ENCODE measurements at regions of chr15 and their contacts with region 1.

Region 1: GRCh38 chr15:90529371-90530249 is at the start of gene CRTC3:
- DNase-seq: peak; percentile 59 to 78 (median 69)
- ATAC-seq: peak; percentile 77 to 94 (median 86)
- H3K4me3 ChIP-seq: peak within 1 kb of the TSS; percentile 65 to 95 (median 85)
- H3K27ac ChIP-seq: peak within 1 kb of the TSS; percentile 86 to 98 (median 95)
- H3K4me1 ChIP-seq: peaks cover 0 to 42% (median 24%) of the 10 kb centered on the region in 12 donors
- H3K27me3 ChIP-seq: no peaks in the 10 kb centered on the region
- CTCF ChIP-seq: no peak
- POLR2A ChIP-seq: peak in 1 of 2 donors; percentile 64
- total RNA-seq, gene CRTC3: 21.5 to 42.2 (median 26.8) TPM

Region 2: DNA sequence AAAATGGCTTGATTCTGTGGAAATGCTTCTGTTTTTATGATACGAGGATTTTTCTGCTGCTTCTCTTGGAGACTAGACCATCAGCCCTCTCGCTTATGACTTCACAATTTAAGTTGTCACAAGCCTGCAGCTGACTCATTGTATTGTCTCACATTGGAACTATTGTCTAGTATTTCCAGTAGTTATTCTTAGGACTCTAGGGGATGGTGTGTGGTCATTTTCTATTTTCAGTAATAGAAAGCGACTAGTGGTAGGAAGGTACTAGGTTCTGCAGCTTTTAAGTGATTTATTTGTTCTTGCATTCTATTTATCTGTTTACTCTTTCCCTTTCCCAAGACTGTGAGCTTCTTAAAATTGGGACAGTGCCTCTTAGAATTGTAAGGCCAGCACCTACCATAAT is 66.2 kb before region 1 on chr15:
- intact Hi-C with region 1: no loop called
- DNase-seq: peak in 2 of 5 donors; percentile 43 to 54
- ATAC-seq: peak; percentile 88 to 95 (median 90)
- H3K4me3 ChIP-seq: peak overlapping the region in 1 of 12 donors; percentile 17
- H3K27ac ChIP-seq: peak overlapping the region; percentile 60 to 94 (median 84)
- H3K4me1 ChIP-seq: peaks cover 0 to 70% (median 58%) of the 10 kb centered on the region in 12 donors
- H3K27me3 ChIP-seq: no peaks in the 10 kb centered on the region
- CTCF ChIP-seq: peak in 7 of 12 donors; percentile 8 to 38 (median 24)
- POLR2A ChIP-seq: no peak

Region 3: GRCh38 chr15:90557186-90558084 is 27.8 kb after region 1 on chr15:
- intact Hi-C with region 1: loop called in 2 of 10 experiments (anchors 2 to 5 kb)
- DNase-seq: peak; percentile 83 to 96 (median 89)
- ATAC-seq: peak; percentile 82 to 89 (median 86)
- H3K4me3 ChIP-seq: peak overlapping the region in 3 of 12 donors; percentile 11 to 17 (median 14)
- H3K27ac ChIP-seq: peak overlapping the region; percentile 75 to 91 (median 84)
- H3K4me1 ChIP-seq: peaks cover 8 to 93% (median 81%) of the 10 kb centered on the region in 12 donors
- H3K27me3 ChIP-seq: no peaks in the 10 kb centered on the region
- CTCF ChIP-seq: peak in 1 of 12 donors; percentile 5
- POLR2A ChIP-seq: peak in 1 of 2 donors; percentile 15

Region 4: DNA sequence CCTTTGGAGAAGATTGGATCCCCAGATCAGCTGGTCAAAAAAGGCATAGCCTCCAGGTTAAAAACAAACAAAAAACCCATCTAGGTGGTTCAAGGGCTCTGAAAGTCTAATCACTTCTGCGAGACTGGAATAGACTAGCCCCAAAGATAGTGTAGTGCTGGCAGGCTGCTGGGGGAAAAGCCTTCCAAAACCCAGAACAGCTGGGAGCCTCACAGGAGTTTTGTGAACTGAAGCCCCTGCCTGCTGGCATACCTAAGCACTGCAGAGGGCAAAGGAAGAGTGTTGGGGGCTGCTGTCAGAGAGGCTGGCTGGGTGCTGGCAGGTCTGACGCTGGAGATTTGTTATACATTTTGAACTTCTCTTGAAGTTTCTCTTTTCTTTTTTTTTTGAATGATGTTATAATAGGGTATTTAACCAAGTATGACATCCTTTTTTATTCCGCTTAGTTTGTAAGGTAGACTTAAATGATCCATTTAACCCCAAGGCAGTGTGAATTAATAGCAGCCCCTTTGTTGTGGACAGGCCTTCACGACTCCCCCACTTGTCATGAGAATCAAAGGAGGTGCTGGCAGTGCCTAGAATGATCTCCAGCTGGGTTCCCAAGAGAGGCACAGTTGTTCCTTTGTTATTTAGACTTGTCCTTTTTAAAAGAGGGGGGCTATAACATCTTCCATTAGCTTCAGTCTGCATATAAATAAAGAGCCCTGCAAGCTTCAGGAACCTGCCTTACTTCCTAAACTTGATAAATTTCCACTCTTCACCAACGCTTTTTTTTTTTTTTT is 54.1 kb after region 1 on chr15:
- intact Hi-C with region 1: loop called in 1 of 10 experiments (anchors 10 kb)
- DNase-seq: no peak
- ATAC-seq: peak in 3 of 4 donors; percentile 31 to 51 (median 38)
- H3K4me3 ChIP-seq: no peak overlapping the region
- H3K27ac ChIP-seq: peak overlapping the region in 11 of 12 donors; percentile 2 to 50 (median 25)
- H3K4me1 ChIP-seq: peaks cover 0 to 67% (median 46%) of the 10 kb centered on the region in 12 donors
- H3K27me3 ChIP-seq: no peaks in the 10 kb centered on the region
- CTCF ChIP-seq: no peak
- POLR2A ChIP-seq: no peak

Region 5: GRCh38 chr15:90598031-90598577 is 68.5 kb after region 1 on chr15:
- intact Hi-C with region 1: loop called in 8 of 10 experiments (anchors 2 to 10 kb)
- DNase-seq: peak in 4 of 5 donors; percentile 56 to 72 (median 64)
- ATAC-seq: peak; percentile 72 to 78 (median 76)
- H3K4me3 ChIP-seq: no peak overlapping the region
- H3K27ac ChIP-seq: peak overlapping the region; percentile 25 to 87 (median 66)
- H3K4me1 ChIP-seq: peaks cover 8 to 59% (median 35%) of the 10 kb centered on the region in 12 donors
- H3K27me3 ChIP-seq: no peaks in the 10 kb centered on the region
- CTCF ChIP-seq: peak in 7 of 12 donors; percentile 12 to 47 (median 22)
- POLR2A ChIP-seq: no peak